ENCODE measurements at regions of chr3 and their contacts with region 1.

Region 1: DNA sequence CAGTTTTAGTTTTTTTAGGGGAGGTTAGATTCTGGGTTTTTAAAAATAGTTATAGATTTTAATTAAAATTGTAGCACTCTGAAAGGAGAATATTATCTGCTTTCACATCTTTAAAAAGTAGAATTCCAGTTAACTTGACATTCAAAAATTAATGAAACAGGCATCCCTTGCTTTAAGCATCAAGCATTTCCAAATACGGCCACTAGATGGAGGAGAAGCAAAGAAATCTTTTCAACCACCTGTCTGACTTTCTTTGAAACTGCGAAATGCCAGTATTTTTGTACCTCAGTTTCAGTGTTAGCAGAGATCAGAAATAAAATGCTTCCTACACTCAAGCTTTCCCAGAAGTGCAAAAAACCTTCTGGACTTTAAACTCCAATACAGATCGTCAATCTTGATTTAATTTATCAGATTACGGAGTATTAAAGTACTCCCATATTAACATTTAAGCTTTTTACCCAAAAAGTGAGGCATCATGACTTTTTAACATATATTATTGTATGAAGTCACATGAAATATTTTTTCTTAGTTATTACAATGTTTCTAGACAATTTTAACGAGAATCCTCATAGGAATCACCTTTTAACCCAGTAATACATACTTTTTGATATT is 153.3 kb downstream of the P3H2 start:
- DNase-seq: peak; percentile 21
- H3K4me3 ChIP-seq: no peak overlapping the region
- H3K27ac ChIP-seq: no peak overlapping the region
- H3K27me3 ChIP-seq: no peaks in the 10 kb centered on the region
- CTCF ChIP-seq: peak; percentile 85

Region 2: DNA sequence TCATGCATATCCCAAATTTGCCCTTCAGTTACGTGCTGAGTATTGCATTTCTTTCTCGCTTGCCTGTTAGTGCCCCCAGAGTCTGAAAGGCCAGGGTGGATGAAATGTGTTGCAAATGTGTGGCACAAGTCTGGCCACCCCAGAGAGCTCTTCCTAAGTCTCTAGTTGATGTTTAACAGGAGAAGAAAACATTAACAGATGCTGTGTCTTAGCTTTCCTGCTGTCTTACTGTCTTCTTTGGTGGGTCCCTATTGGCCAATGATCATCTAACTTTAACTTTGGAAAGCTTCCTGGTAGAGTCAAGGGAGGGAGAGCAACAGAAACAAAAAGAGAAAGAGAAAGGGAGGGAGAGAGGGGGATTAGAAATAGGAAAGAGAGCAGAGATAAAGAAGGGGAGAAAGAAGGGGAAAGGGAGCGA is 230.0 kb after region 1 on chr3:
- CTCF ChIA-PET with region 1: interaction called, 93 read pairs
- POLR2A ChIA-PET with region 1: no interaction called
- DNase-seq: no peak
- H3K4me3 ChIP-seq: no peak overlapping the region
- H3K27ac ChIP-seq: no peak overlapping the region
- H3K27me3 ChIP-seq: no peaks in the 10 kb centered on the region
- CTCF ChIP-seq: no peak

Region 3: DNA sequence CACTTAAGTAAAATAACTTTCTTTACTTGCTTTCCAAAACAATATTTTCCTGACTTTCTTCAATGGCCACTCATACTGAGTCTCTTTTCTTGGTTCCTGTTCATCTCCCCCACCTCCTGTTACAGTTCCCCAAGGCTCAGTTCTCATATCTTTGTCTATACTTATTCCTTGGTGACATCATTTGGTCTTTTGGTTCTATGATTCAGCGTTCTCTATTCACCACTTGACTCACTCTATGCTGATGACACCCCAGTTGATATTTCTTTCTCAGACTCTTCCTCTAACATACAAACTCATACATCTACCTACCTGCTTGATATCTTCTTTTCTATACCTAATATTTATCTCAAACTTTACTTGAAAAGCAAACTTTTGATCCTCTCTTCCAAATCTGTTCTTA is 238.4 kb after region 1 on chr3:
- CTCF ChIA-PET with region 1: interaction called, 93 read pairs
- POLR2A ChIA-PET with region 1: no interaction called
- DNase-seq: peak; percentile 27
- H3K4me3 ChIP-seq: no peak overlapping the region
- H3K27ac ChIP-seq: no peak overlapping the region
- H3K27me3 ChIP-seq: no peaks in the 10 kb centered on the region
- CTCF ChIP-seq: no peak

Region 4: DNA sequence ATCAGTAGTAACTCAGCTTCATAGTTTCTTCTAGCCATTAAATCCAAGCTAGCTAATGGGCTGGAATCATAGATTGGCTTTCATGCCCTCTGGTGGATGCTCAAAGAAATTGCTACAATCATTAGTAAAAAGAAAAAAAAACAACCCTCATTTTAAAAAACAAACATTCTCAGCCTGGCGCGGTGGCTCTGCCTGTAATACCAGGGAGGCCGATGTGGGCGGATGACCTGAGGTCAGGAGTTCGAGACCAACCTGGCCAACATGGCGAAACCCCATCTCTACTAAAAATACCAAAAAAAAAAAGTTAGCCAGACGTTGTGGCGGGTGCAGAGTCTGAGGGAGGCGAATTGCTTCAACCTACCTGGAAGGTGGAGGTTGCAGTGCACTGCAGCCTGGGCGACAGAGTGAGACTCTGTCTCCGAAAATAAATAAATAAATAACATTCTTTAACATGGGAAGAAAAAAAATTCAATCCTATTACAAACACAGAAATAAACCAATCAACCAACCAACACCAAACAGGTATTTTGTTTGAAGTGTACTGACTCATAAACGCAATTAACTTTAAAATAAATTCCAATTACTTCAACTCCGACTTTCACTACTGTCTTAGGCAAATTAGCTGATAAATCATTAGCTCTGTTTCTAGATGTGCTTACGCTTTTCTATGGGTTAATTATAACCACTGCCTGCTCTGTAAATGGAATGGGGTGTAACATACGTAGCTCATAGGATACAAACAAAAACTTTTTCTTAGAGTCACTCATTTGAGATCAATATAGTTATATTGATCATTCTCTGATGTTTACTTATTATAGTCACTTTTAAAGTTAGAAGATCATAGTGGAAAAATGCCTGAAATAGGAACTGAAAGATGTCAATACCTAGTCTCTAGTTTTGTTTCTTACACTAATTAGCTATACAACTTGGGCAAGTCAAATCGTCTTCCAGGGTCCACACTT is 457.4 kb after region 1 on chr3:
- CTCF ChIA-PET with region 1: interaction called, 82 read pairs
- POLR2A ChIA-PET with region 1: no interaction called
- DNase-seq: peak; percentile 37
- H3K4me3 ChIP-seq: no peak overlapping the region
- H3K27ac ChIP-seq: no peak overlapping the region
- H3K27me3 ChIP-seq: no peaks in the 10 kb centered on the region
- CTCF ChIP-seq: peak; percentile 75

Measured in AG04450 (cell line).